GM10248 (cell line): ENCODE measurements at regions of chr12 and their contacts with region 1.

Region 1: GRCh38 chr12:98490501-98491453 is 24.6 kb upstream of the TMPO start:
- DNase-seq: peak; percentile 70
- CTCF ChIP-seq: peak; percentile 88

Region 2: GRCh38 chr12:98470469-98471082 is 20.2 kb before region 1 on chr12:
- CTCF ChIA-PET with region 1: interaction called, 13 read pairs
- POLR2A ChIA-PET with region 1: no interaction called
- DNase-seq: no peak
- CTCF ChIP-seq: no peak

Region 3: GRCh38 chr12:98503592-98504367 is 13.0 kb after region 1 on chr12:
- CTCF ChIA-PET with region 1: interaction called, 20 read pairs
- POLR2A ChIA-PET with region 1: no interaction called
- DNase-seq: peak; percentile 88
- CTCF ChIP-seq: no peak

Region 4: DNA sequence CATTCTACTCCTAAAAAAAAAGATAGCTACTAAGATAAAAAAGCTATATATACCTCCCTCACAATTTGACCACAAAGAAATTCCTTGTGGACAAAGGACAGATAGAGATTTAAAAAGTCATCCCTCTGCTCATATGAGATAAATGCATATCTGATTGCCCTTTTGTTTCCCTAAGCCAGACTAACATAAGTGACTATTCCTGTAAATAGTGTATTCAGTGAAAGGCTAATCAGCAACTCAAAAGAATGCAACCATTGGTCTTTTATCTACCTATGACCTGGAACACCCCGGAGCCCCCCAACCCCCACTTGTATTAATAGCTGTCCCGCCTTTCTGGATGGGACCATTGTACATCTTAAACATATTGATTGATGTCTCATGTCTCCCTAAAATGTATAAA is 18.3 kb after region 1 on chr12:
- CTCF ChIA-PET with region 1: interaction called, 55 read pairs
- POLR2A ChIA-PET with region 1: no interaction called
- DNase-seq: no peak
- CTCF ChIP-seq: no peak

Region 5: DNA sequence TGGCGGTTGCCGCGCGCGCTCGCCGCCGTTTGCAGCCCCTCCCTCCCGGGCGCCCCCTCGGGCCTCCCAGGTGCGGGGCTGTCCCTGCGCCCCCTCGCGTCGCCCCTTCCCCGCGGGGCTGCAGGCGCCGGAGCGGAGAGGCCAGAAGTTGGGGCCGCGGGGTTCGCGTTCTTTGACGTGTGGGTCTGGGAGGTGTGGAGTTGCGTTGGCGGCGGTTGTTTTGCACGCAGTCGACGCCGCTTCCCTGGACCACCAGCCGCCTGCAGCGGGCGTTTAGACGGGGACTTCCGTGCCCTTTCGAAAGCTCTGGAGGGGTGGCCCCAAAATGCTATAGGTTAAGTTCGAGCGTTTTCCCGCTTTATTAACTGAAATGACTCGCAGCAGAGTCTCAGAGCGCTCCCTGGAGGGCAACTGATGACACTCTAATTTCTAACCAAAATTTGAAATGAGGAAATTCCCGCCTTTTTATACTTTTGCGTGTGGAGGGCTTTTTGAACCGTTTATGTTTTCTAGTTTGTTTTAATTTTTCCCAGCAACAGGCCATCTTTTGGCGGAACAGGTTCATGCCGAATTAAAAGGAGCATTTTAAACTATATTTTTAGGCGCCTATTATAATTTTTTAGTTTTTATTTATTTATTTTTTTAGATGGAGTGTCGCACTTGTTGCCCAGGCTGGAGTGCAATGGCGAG is 25.6 kb after region 1 on chr12:
- CTCF ChIA-PET with region 1: interaction called, 55 read pairs
- POLR2A ChIA-PET with region 1: interaction called, 3 read pairs
- DNase-seq: peak; percentile 86
- CTCF ChIP-seq: peak; percentile 63